ENCODE measurements at regions of chr5 and their contacts with region 1.

Region 1: DNA sequence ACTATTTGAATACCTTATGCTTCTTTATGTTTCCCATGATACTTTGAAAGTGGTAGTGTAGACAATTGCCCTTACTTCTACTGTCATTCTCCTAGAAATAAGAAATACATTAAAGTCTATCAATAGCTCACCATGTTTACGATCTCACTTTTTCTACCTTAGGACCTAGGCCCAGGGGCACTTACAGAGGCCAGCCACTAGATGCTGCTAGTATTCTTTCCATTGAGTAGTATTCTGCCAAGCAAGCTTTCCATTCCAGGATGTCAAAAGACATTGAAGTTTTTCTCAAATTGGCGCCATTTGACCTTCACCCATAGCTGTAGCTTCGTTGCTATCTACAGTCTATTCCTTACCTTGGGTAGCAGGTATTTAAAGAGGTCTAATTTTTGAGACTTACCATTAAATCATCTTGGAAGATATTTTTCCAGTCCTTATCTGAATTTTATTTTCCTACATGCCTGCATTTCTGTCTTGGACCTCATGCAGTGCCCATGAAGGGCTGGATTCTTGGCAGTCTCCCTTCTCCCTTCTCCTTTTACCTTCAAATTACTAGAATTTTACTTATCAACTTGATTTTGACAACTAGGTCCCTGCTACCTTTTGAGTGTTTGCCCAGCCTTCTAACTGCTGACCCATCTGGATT is 246.0 kb upstream of the NUDT12 start:
- DNase-seq: peak; percentile 38 to 64
- H3K4me3 ChIP-seq: no peak overlapping the region
- H3K4me3 Mint-ChIP-seq: no peak overlapping the region
- H3K27ac Mint-ChIP-seq: no peak overlapping the region
- H3K4me1 ChIP-seq: no peaks in the 10 kb centered on the region
- H3K4me1 Mint-ChIP-seq: no peaks in the 10 kb centered on the region
- H3K27me3 ChIP-seq: no peaks in the 10 kb centered on the region
- H3K27me3 Mint-ChIP-seq: no peaks in the 10 kb centered on the region
- CTCF ChIP-seq: peak; percentile 91 to 97

Region 2: GRCh38 chr5:103582364-103582763 is 226.2 kb before region 1 on chr5:
- CTCF ChIA-PET with region 1: interaction called, 5 read pairs
- POLR2A ChIA-PET with region 1: no interaction called
- intact Hi-C with region 1: loop called (anchors 5 kb)
- DNase-seq: peak in 1 of 2 experiments; percentile 38
- H3K4me3 ChIP-seq: no peak overlapping the region
- H3K4me3 Mint-ChIP-seq: no peak overlapping the region
- H3K27ac Mint-ChIP-seq: no peak overlapping the region
- H3K4me1 ChIP-seq: no peaks in the 10 kb centered on the region
- H3K4me1 Mint-ChIP-seq: no peaks in the 10 kb centered on the region
- H3K27me3 ChIP-seq: no peaks in the 10 kb centered on the region
- H3K27me3 Mint-ChIP-seq: peaks cover 6% of the 10 kb centered on the region
- CTCF ChIP-seq: peak in 1 of 2 experiments; percentile 58